ENCODE measurements at regions of chr7 and their contacts with region 1.

Region 1: GRCh38 chr7:75704928-75705327 is 33.8 kb downstream of the HIP1 start:
- DNase-seq: no peak
- H3K4me3 Mint-ChIP-seq: no peak overlapping the region
- H3K27ac Mint-ChIP-seq: no peak overlapping the region
- H3K4me1 Mint-ChIP-seq: no peaks in the 10 kb centered on the region
- H3K27me3 Mint-ChIP-seq: no peaks in the 10 kb centered on the region
- CTCF ChIP-seq: no peak

Region 2: GRCh38 chr7:75738987-75739795 is 34.3 kb after region 1 on chr7:
- CTCF ChIA-PET with region 1: no interaction called
- intact Hi-C with region 1: loop called (anchors 5 kb)
- DNase-seq: peak; percentile 98
- H3K4me3 Mint-ChIP-seq: peak overlapping the region; percentile 88
- H3K27ac Mint-ChIP-seq: peak overlapping the region; percentile 19
- H3K4me1 Mint-ChIP-seq: peaks cover 11% of the 10 kb centered on the region
- H3K27me3 Mint-ChIP-seq: peaks cover 12% of the 10 kb centered on the region
- CTCF ChIP-seq: no peak